Testis (tissue), 5 donors: ENCODE measurements at regions of chr21 and their contacts with region 1.

Region 1: GRCh38 chr21:31173881-31174555 is 135.7 kb upstream of the KRTAP19-8 start:
- DNase-seq: no peak
- H3K4me3 ChIP-seq: no peak overlapping the region
- H3K27ac ChIP-seq: peak overlapping the region in 1 of 2 donors; percentile 43
- H3K4me1 ChIP-seq: peaks cover 7% of the 10 kb centered on the region
- H3K27me3 ChIP-seq: no peaks in the 10 kb centered on the region
- CTCF ChIP-seq: no peak
- POLR2A ChIP-seq: no peak

Region 2: GRCh38 chr21:30541764-30542163 is 632.3 kb before region 1 on chr21 and contains the start of gene KRTAP19-6:
- intact Hi-C with region 1: no loop called
- DNase-seq: no peak
- H3K4me3 ChIP-seq: no peak within 1 kb of the TSS
- H3K27ac ChIP-seq: no peak within 1 kb of the TSS
- H3K4me1 ChIP-seq: no peaks in the 10 kb centered on the region
- H3K27me3 ChIP-seq: no peaks in the 10 kb centered on the region
- CTCF ChIP-seq: no peak
- POLR2A ChIP-seq: no peak
- total RNA-seq, gene KRTAP19-6: not detected

Region 3: GRCh38 chr21:31107871-31108270 is 66.1 kb before region 1 on chr21:
- intact Hi-C with region 1: loop called (anchors 10 kb)
- DNase-seq: no peak
- H3K4me3 ChIP-seq: no peak overlapping the region
- H3K27ac ChIP-seq: peak overlapping the region in 1 of 2 donors; percentile 41
- H3K4me1 ChIP-seq: peaks cover 13% of the 10 kb centered on the region
- H3K27me3 ChIP-seq: no peaks in the 10 kb centered on the region
- CTCF ChIP-seq: no peak
- POLR2A ChIP-seq: no peak

Region 4: DNA sequence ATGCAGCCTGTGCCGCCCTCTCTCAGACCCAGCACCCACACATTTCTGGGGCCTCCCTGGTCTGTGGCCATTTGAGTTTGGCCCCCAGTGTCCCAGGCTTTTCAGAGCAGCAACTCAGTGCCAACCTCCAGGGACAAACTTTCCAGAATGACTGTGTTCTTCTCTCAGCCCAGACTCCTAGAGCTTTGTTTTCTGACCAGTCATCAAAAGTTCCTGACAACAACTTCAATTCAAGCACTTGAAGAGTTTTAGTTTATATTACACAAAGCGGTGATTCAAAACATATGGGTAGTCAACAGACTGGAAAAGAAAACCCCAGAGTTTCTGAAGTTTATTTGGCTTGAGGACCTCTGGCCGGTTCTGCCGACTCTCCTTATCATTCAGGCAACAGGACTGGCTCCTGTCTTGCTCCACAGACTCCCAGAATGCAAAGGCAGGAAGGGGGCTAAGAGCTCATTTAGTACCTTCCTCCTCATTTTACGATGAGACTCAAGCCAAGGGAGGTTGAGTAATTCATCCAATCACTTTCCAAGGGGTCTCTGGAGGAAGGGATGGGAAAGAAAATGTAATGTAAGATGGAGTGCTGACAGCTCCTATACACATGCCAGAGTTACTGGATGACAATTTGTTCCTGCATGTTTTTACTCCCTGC is 197.0 kb after region 1 on chr21:
- intact Hi-C with region 1: no loop called
- DNase-seq: peak; percentile 58
- H3K4me3 ChIP-seq: no peak overlapping the region
- H3K27ac ChIP-seq: peak overlapping the region; percentile 0 to 28
- H3K4me1 ChIP-seq: peaks cover 28% of the 10 kb centered on the region
- H3K27me3 ChIP-seq: no peaks in the 10 kb centered on the region
- CTCF ChIP-seq: no peak
- POLR2A ChIP-seq: no peak